ENCODE measurements at regions of chr5 and their contacts with region 1.

Region 1: GRCh38 chr5:39080597-39081204 is 6.5 kb upstream of the RICTOR start:
- DNase-seq: no peak
- H3K4me3 ChIP-seq: no peak overlapping the region
- H3K27me3 ChIP-seq: no peaks in the 10 kb centered on the region
- CTCF ChIP-seq: peak; percentile 84

Region 2: DNA sequence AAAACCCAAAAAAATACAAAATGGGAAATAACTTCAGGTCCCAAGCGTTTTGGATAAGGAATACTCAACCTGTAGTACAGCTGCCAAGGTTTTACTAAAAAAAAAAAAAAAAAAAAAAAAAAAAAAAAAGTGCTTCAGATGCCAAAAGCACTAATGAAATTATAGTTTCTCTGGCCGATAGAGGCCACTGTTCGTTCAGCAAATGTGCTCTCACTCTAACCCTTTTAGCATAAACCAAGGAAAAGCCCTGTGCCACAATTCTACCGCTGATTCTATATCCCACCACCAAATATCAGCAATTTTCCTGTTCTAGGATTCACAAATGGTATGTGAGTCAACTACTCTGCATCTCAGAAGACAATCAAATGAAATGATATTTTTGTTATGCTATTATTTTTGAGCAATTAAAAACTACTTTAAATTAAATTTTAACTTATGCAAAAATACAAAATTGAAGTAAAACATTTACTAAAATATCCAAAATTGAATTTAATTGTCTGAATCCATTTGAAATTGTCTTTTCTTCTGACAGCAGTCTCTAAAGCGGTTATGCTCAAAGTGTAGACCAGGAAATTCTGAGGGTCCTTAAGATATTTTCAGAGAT is 86.3 kb before region 1 on chr5:
- CTCF ChIA-PET with region 1: interaction called, 20 read pairs
- POLR2A ChIA-PET with region 1: no interaction called
- DNase-seq: no peak
- H3K4me3 ChIP-seq: no peak overlapping the region
- H3K27me3 ChIP-seq: no peaks in the 10 kb centered on the region
- CTCF ChIP-seq: peak; percentile 64

Region 3: GRCh38 chr5:39100851-39101396 is 20.2 kb after region 1 on chr5:
- CTCF ChIA-PET with region 1: interaction called, 22 read pairs
- POLR2A ChIA-PET with region 1: no interaction called
- DNase-seq: peak; percentile 95
- H3K4me3 ChIP-seq: no peak overlapping the region
- H3K27me3 ChIP-seq: no peaks in the 10 kb centered on the region
- CTCF ChIP-seq: no peak

Measured in BJ (cell line).